ENCODE measurements at regions of chr12 and their contacts with region 1.

Region 1: DNA sequence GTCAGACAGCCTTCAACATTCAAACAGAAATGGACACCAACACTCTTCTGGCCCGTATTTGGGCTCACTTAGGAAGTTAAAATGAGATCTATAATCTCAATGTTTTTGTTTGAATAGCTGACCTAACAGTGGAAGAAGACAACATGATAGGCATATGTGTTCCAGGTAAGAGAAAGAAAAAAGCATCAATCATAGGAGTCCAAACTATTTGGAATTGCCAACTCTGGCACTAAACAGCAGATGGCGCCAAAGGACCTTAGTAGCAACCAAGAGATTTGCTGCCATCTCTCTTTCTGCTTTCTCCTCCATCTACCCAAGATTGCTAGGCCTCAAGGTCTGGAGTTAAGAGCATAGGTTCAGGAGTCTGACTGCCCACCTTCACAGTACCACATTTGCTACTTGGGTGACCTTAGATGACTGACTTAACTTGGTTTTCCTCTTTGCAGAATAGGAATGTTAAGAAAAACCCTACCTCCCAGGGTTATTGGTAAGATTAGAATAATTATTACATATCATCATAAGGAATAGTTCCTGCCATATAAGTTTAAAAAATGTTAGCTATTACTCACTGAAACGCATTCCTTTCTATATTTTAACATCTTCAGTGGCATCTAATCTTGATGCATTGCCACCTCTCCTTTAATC is 30.2 kb downstream of the PEX5 start:
- DNase-seq: peak; percentile 69
- ATAC-seq: no peak

Region 2: DNA sequence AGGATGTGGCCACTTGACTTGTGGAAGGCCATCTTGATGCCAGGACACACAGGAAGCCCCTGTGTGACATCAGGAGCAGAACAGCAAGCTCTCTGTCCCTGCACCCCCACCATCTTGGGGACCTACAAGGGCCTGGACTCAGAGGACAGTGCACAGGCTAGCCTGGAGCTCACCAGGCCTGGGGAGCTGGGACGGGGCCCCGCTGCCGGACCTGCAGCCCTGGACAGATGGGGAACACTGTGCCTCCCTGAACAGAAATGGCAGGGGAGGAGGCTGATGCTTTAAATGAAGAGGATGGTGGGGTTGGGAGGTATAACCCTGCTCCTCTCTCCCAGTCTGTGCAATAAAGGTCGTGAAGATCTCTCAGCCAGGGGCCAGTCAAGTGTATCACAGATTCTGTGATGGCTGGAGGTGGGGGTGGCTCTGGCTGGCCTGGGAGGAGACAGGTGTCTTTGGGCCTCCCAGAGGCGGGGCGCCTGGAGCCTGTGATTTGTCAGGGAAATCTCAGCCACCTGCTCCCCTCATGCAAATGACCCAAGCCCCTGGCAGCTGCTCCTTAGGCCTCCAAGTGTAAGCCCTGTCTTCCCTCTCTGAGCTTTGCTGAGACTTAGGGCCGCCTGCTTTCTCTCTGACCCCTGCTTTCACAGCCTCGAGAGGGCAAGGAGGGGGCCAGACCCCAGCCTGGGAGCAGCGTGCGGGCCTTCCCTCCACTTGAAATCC is 380.1 kb before region 1 on chr12:
- intact Hi-C with region 1: no loop called
- DNase-seq: peak; percentile 30
- ATAC-seq: no peak

Region 3: DNA sequence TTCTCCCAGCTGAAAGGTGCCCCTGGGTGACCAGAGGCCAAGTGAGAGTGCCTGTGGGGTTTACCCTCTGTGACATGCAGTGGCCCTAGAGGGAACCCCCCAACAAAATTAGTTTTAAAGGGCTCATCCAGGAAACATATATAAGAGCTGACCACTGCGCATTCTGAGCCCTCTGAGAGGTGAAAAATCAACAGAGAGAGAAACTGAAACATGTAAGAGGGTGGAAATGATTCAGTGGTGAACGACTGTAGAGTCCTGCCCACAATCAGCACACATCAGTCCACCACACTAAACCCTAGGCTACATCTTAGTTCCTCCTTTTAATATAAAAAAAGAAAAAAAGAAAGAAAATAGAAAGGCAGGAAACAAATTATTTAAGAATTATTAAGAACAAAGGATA is 63.1 kb after region 1 on chr12:
- intact Hi-C with region 1: no loop called
- DNase-seq: no peak
- ATAC-seq: no peak

Region 4: GRCh38 chr12:7460375-7461259 is 240.9 kb after region 1 on chr12:
- intact Hi-C with region 1: loop called (anchors 2 kb)
- DNase-seq: no peak
- ATAC-seq: peak; percentile 46

Region 5: DNA sequence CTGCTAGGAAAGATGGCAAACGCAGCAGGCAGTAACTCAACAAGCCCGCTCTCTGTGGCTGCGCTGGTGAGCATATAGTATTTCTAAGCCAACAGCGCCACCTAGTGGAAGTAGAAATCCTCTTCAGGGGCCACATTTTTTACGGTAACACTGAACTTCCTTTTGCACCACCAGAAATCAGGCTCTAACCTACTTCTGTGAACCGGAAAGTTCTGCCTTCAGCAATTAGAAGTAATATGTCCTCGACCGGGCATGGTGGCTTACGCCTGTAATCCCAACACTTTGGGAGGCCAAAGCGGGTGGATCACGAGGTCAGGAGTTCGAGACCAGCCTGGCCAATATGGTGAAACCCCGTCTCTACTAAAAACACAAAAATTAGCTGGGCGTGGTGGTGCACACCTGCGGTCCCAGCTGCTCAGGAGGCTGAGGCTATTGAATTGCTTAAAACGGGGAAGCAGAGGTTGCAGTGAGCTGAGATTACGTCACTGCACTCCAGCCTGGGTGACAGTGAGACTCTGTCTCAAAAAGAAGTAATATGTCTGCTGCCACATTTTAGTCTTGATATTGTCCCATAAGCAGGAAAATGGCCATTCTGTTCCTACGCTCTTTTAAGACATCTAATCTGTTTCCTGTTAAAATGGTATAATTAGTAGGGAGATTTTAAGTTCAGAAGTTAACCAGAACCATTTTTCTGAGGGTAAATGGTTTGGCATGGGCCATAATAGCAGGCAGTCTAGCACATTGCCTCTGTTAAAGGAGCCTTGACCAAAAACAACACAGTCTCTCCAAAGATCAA is 419.2 kb after region 1 on chr12:
- intact Hi-C with region 1: loop called (anchors 1 kb)
- DNase-seq: peak; percentile 74
- ATAC-seq: peak; percentile 94

Measured in Right ventricle myocardium inferior (tissue), 1 donor.